ENCODE measurements at regions of chrX and their contacts with region 1.

Region 1: GRCh38 chrX:15674841-15675489 is 10.4 kb upstream of the CLTRN start:
- DNase-seq: peak; percentile 87
- H3K4me3 Mint-ChIP-seq: no peak overlapping the region
- H3K27ac Mint-ChIP-seq: no peak overlapping the region
- H3K4me1 Mint-ChIP-seq: peaks cover 22% of the 10 kb centered on the region
- H3K27me3 Mint-ChIP-seq: no peaks in the 10 kb centered on the region

Region 2: GRCh38 chrX:14872851-14873675 is 801.9 kb before region 1 on chrX and contains the starts of genes FANCB and MOSPD2:
- CTCF ChIA-PET with region 1: no interaction called
- POLR2A ChIA-PET with region 1: no interaction called
- intact Hi-C with region 1: loop called (anchors 2 kb)
- DNase-seq: peak; percentile 96
- H3K4me3 Mint-ChIP-seq: peak within 1 kb of the TSS; percentile 79
- H3K27ac Mint-ChIP-seq: peak within 1 kb of the TSS; percentile 80
- H3K4me1 Mint-ChIP-seq: peaks cover 15% of the 10 kb centered on the region
- H3K27me3 Mint-ChIP-seq: no peaks in the 10 kb centered on the region
- total RNA-seq, gene FANCB: 12.0 to 16.2 TPM
- total RNA-seq, gene MOSPD2: 12.6 to 13.7 TPM

Region 3: DNA sequence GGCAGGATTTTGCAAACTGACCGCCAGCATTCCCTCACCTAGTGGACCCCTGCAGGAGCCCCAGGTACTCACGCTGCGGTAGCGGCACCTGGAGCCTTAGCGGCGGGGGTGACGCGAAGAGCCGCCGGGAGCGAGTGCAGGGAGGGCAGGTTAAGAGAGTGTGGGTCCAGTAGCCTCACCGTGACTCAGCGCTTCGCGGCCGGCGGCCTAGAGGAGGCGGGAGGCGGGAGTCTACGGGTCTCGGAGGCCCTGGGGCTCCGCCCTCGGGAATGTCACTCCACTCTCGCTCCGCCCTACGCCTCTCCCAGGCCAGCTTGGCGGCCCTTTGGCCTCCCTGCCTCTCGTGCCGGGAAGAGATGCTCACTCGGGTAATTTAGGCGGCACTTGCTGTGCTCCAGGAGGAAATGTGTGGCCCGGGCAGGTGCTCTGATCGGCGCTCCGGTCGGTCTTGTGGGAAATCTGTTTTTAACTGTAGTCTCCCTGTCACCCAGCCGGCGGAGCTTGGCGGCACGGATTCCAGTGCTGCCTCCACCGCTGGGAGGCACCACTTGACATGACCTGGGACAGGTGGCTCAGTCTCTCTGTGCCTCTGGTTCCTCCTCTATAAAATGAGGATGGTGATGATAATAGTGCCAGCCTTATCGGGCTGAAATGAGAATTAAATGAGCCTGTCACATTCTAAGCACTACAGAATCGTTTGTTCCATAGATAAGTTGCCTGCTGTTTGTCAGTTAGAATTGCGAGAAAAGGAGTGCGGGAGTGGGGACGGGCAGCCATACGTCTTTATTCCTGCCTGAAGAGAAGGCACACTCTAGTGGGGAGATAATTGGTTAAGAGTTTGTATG is 181.6 kb before region 1 on chrX and contains the start of gene PIR:
- CTCF ChIA-PET with region 1: no interaction called
- POLR2A ChIA-PET with region 1: no interaction called
- intact Hi-C with region 1: loop called (anchors 10 kb)
- DNase-seq: peak; percentile 80
- H3K4me3 Mint-ChIP-seq: peak within 1 kb of the TSS; percentile 79
- H3K27ac Mint-ChIP-seq: peak within 1 kb of the TSS; percentile 31
- H3K4me1 Mint-ChIP-seq: peaks cover 4% of the 10 kb centered on the region
- H3K27me3 Mint-ChIP-seq: no peaks in the 10 kb centered on the region
- total RNA-seq, gene PIR: 2.4 to 3.1 TPM

Region 4: GRCh38 chrX:15619061-15619777 is 55.7 kb before region 1 on chrX:
- CTCF ChIA-PET with region 1: no interaction called
- POLR2A ChIA-PET with region 1: no interaction called
- intact Hi-C with region 1: no loop called
- DNase-seq: no peak
- H3K4me3 Mint-ChIP-seq: no peak overlapping the region
- H3K27ac Mint-ChIP-seq: no peak overlapping the region
- H3K4me1 Mint-ChIP-seq: no peaks in the 10 kb centered on the region
- H3K27me3 Mint-ChIP-seq: peaks cover 1% of the 10 kb centered on the region

Region 5: GRCh38 chrX:15686818-15687685 is 12.1 kb after region 1 on chrX:
- CTCF ChIA-PET with region 1: no interaction called
- POLR2A ChIA-PET with region 1: no interaction called
- intact Hi-C with region 1: no loop called
- DNase-seq: peak; percentile 55
- H3K4me3 Mint-ChIP-seq: no peak overlapping the region
- H3K27ac Mint-ChIP-seq: no peak overlapping the region
- H3K4me1 Mint-ChIP-seq: peaks cover 8% of the 10 kb centered on the region
- H3K27me3 Mint-ChIP-seq: no peaks in the 10 kb centered on the region

Region 6: GRCh38 chrX:15749642-15750610 is 75.0 kb after region 1 on chrX:
- CTCF ChIA-PET with region 1: no interaction called
- POLR2A ChIA-PET with region 1: no interaction called
- intact Hi-C with region 1: loop called (anchors 2 kb)
- DNase-seq: peak; percentile 35
- H3K4me3 Mint-ChIP-seq: peak overlapping the region; percentile 53
- H3K27ac Mint-ChIP-seq: peak overlapping the region; percentile 94
- H3K4me1 Mint-ChIP-seq: peaks cover 67% of the 10 kb centered on the region
- H3K27me3 Mint-ChIP-seq: no peaks in the 10 kb centered on the region

Region 7: GRCh38 chrX:15854712-15855567 is 180.0 kb after region 1 on chrX and contains the start of gene AP1S2:
- CTCF ChIA-PET with region 1: interaction called, 3 read pairs
- POLR2A ChIA-PET with region 1: no interaction called
- intact Hi-C with region 1: loop called (anchors 1 kb)
- DNase-seq: peak; percentile 94
- H3K4me3 Mint-ChIP-seq: peak within 1 kb of the TSS; percentile 86
- H3K27ac Mint-ChIP-seq: peak within 1 kb of the TSS; percentile 95
- H3K4me1 Mint-ChIP-seq: peaks cover 23% of the 10 kb centered on the region
- H3K27me3 Mint-ChIP-seq: no peaks in the 10 kb centered on the region
- total RNA-seq, gene AP1S2: 21.4 to 29.3 TPM

Region 8: DNA sequence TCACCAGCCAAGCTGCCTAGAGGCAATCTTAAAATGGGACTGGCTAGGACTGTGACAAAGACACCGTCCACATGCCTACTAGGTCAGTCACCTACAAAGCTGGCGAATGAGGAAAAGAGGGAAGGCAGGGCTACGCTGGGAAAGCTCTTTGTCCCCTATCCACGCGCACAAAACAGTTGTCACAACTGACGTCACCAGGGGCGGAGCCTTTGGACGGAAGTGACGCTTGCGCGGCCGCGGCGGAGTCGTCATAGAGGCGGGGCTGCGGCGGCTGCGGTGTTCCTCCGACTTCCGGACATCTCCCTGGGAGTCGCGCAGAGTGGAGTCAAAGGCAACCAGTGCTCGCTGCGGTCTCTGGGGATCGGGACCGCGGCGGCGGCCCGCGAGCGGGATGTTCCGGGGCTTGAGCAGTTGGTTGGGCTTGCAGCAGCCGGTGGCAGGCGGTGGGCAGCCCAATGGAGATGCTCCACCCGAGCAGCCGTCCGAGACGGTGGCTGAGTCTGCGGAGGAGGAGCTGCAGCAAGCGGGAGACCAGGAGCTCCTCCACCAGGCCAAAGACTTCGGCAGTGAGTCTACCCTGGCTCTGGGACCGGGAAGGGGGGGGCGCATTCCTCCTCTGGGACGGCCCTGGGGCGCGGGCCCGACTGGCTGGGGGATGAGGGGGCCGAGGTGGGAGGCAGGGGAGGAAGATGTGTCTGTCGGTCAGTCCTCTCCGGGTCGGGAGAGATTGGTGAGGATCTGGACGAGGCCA is 1044.5 kb after region 1 on chrX and contains the start of gene SYAP1:
- CTCF ChIA-PET with region 1: no interaction called
- POLR2A ChIA-PET with region 1: no interaction called
- intact Hi-C with region 1: loop called (anchors 10 kb)
- DNase-seq: peak; percentile 94
- H3K4me3 Mint-ChIP-seq: peak within 1 kb of the TSS; percentile 92
- H3K27ac Mint-ChIP-seq: peak within 1 kb of the TSS; percentile 89
- H3K4me1 Mint-ChIP-seq: peaks cover 18% of the 10 kb centered on the region
- H3K27me3 Mint-ChIP-seq: no peaks in the 10 kb centered on the region
- total RNA-seq, gene SYAP1: 20.8 to 22.4 TPM